IMR-90 (cell line): ENCODE measurements at regions of chr3 and their contacts with region 1.

Region 1: DNA sequence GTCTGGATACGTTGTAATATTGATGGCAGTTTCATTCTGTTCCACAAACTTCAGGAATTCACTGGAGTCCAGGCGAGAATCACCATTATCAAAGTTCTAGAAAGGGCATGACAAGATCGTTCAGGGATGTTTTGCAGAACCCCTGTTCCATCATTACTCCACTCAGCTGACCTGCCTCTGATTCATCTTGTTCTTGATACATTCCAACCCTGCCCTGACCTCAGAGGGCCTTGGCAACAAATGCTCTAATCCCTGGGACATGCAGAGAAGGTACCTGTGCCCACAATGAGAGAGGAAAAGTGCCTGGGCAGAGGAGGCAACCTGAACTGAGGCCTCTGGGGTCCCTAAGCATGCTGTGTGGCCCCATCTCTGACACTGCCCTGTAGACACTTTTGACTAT is 45.9 kb downstream of the FSTL1 start:
- DNase-seq: peak; percentile 25
- ATAC-seq: peak; percentile 46; the same call in 1 of the 2 replicates
- H3K4me3 ChIP-seq: no peak overlapping the region
- H3K27ac ChIP-seq: no peak overlapping the region
- H3K4me1 ChIP-seq: peaks cover 2% of the 10 kb centered on the region; the same call in 1 of the 2 replicates
- H3K27me3 ChIP-seq: no peaks in the 10 kb centered on the region
- CTCF ChIP-seq: no peak
- POLR2A ChIP-seq: no peak
- RAD21 ChIP-seq: no peak

Region 2: DNA sequence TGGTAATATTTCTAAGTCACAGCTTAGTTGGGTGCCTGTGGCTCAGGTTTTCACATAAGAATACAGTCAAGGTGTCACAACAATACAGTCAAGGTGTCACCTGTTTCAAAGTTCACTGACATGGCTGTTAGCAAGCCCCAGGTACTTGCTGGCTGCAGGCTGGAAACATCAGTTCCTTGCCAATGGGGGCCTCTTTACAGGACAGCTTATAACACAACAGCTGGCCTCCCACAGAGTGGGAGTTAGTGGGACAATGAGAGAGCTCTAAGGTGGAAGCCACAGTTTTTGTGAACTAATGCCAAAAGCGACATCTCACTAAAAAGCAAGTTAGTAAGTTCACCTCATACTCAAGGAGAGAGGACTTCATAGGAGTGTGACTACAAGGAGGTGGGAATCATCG is 165.2 kb before region 1 on chr3:
- CTCF ChIA-PET with region 1: interaction called, 3 read pairs
- POLR2A ChIA-PET with region 1: no interaction called
- dilution Hi-C with region 1: no loop called
- in situ Hi-C with region 1: loop called (anchors 5 kb)
- intact Hi-C with region 1: no loop called
- DNase-seq: no peak
- ATAC-seq: no peak
- H3K4me3 ChIP-seq: no peak overlapping the region
- H3K27ac ChIP-seq: no peak overlapping the region
- H3K4me1 ChIP-seq: no peaks in the 10 kb centered on the region; the same call in 1 of the 2 replicates
- H3K27me3 ChIP-seq: peaks cover 14% of the 10 kb centered on the region
- CTCF ChIP-seq: no peak
- POLR2A ChIP-seq: no peak
- RAD21 ChIP-seq: no peak

Region 3: DNA sequence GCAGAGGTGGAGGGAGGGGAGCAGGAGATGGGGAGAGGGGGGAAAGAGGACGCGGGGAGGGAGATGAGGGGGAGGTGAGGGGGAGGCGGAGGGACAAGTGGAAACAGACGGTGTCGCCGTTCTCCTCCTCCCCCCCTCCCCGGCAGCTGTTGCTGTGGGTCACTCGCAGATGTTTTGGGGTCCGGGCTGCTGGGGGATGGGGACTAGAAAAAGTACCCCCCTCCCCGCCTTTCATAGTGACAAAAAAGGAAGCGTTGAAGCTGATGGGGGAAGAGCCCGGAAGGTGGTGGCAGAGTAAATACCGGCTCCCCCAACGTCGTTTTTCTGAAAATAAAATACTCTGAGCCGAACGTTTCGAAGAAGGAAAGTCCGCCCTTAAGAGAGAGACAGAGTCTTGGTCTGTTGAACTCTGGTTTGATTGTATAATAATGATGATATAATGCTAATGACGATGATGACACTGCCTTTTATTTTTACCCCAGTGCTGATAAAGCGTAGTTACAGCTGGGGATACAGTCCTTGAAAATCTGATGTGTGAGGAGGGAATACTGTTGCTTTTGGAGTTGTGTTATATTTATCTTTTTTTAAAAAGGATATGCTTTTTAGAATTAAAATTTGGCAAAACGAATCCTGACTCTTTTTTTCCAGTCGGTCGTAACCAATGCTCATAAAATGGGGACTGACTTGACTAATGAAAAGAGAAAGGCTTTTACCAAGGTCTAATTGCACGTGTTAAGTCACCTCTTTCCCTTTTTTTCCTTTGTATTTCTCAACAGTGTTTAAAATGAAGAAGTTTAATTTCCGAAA is 504.1 kb after region 1 on chr3:
- CTCF ChIA-PET with region 1: no interaction called
- POLR2A ChIA-PET with region 1: no interaction called
- dilution Hi-C with region 1: no loop called
- in situ Hi-C with region 1: no loop called
- intact Hi-C with region 1: no loop called
- DNase-seq: no peak
- ATAC-seq: no peak
- H3K4me3 ChIP-seq: peak overlapping the region; percentile 9; the same call in 1 of the 2 replicates
- H3K27ac ChIP-seq: no peak overlapping the region
- H3K4me1 ChIP-seq: no peaks in the 10 kb centered on the region
- H3K27me3 ChIP-seq: peaks cover 12% of the 10 kb centered on the region
- CTCF ChIP-seq: no peak
- POLR2A ChIP-seq: no peak
- RAD21 ChIP-seq: no peak